Caco-2 (cell line): ENCODE measurements at regions of chrX and their contacts with region 1.

Region 1: GRCh38 chrX:71989768-71990426 is 79.3 kb downstream of the NHSL2 start:
- DNase-seq: no peak
- H3K4me3 ChIP-seq: no peak overlapping the region
- H3K4me3 Mint-ChIP-seq: no peak overlapping the region
- H3K27ac Mint-ChIP-seq: peak overlapping the region; percentile 86
- H3K4me1 ChIP-seq: peaks cover 46% of the 10 kb centered on the region
- H3K4me1 Mint-ChIP-seq: peaks cover 33% of the 10 kb centered on the region
- H3K27me3 ChIP-seq: no peaks in the 10 kb centered on the region
- H3K27me3 Mint-ChIP-seq: no peaks in the 10 kb centered on the region
- CTCF ChIP-seq: no peak

Region 2: DNA sequence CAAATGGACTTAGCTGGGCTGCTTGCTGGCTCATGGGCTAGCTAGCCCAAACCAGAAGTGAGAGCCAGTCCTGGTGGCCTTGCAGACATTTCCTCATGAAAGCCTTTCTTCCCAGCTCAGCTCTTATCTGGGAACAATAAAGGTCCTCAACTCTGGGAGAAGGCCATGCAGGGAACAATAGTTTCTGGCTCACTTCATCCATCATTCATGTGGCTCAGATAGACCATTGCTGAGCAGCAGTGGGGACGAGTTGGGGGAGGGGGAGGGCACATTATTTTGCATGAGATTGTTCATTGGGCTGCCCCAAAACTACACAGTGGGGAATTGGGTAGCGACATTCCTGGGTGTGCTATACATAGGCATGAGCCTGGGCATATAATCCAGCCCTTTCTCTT is 31.6 kb before region 1 on chrX:
- CTCF ChIA-PET with region 1: no interaction called
- POLR2A ChIA-PET with region 1: no interaction called
- intact Hi-C with region 1: loop called (anchors 5 kb)
- DNase-seq: no peak
- H3K4me3 ChIP-seq: no peak overlapping the region
- H3K4me3 Mint-ChIP-seq: no peak overlapping the region
- H3K27ac Mint-ChIP-seq: peak overlapping the region; percentile 29
- H3K4me1 ChIP-seq: 0 out of 2 replicates have a peak, but pooled peaks cover 5% of the 10 kb centered on the region
- H3K4me1 Mint-ChIP-seq: no peaks in the 10 kb centered on the region
- H3K27me3 ChIP-seq: no peaks in the 10 kb centered on the region
- H3K27me3 Mint-ChIP-seq: no peaks in the 10 kb centered on the region
- CTCF ChIP-seq: no peak